Ascending aorta (tissue), 2 donors: ENCODE measurements at regions of chr19 and their contacts with region 1.

Region 1: DNA sequence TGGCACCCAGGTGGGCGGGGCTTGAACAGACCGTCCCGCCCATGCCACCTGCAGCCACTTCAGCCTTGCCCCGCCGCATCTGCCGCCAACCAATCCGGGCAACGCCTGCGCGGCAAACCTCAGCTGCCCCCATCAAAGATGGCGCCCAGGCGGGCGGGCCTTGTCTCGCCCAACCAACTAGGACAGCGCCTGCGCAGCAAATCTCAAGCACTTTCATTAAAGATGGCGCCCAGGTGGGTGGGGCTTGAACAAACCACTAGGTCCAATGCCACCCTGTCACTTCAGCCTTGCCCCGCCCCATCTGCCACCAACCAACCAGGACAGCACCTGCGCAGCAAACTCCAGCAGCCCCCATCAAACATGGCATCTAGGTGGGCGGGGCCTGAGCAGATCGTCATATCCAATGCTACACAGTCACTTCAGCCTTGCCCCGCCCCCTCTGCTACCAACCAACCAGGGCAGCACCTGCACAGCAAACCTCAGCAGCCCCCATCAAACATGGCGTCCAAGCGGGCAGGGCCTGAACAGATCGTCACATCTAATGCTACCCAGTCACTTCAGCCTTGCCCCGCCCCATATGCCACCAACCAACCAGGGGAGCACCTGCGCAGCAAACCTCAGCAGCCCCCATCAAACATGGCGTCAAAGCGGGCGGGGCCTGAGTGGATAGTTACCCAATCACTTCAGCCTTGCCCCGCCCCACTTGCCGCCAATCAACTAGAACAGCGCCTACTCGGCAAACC is 1.4 kb downstream of the PEG3 start:
- DNase-seq: peak; percentile 94 to 98
- H3K4me3 ChIP-seq: peak overlapping the region; percentile 57 to 70
- H3K27ac ChIP-seq: peak overlapping the region; percentile 86 to 95
- H3K4me1 ChIP-seq: no peaks in the 10 kb centered on the region
- H3K27me3 ChIP-seq: no peaks in the 10 kb centered on the region
- CTCF ChIP-seq: no peak

Region 2: GRCh38 chr19:56671613-56671994 is 167.5 kb before region 1 on chr19 and contains the start of gene ZNF835:
- intact Hi-C with region 1: loop called (anchors 2 kb)
- DNase-seq: peak; percentile 63 to 94
- H3K4me3 ChIP-seq: peak within 1 kb of the TSS; percentile 57 to 79
- H3K27ac ChIP-seq: no peak within 1 kb of the TSS
- H3K4me1 ChIP-seq: peaks cover 0 to 7% of the 10 kb centered on the region in 2 donors
- H3K27me3 ChIP-seq: no peaks in the 10 kb centered on the region
- CTCF ChIP-seq: peak in 2 of 3 experiments; percentile 26 to 34
- total RNA-seq, gene ZNF835: 4.0 TPM

Region 3: DNA sequence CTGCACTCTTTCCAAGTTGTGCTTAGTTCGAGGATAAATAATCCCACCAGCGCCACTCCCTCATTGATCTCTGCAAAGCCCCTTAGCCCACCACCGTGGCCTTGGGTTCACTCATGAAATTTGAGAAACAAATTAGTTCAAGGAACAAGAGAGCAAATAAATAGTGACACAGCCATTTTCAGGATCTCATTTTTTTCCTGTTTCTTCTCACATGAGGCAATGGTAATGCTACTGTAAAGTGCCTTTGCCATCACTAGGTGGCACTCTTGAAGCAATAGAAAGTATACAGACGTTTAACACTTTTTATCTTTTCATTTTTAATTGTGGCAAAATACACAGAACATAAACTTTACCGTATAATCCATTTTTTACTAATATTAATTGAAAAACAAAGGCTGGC is 90.7 kb before region 1 on chr19:
- intact Hi-C with region 1: loop called (anchors 2 kb)
- DNase-seq: no peak
- H3K4me3 ChIP-seq: no peak overlapping the region
- H3K27ac ChIP-seq: no peak overlapping the region
- H3K4me1 ChIP-seq: no peaks in the 10 kb centered on the region
- H3K27me3 ChIP-seq: no peaks in the 10 kb centered on the region
- CTCF ChIP-seq: peak in 2 of 3 experiments; percentile 33 to 45

Region 4: DNA sequence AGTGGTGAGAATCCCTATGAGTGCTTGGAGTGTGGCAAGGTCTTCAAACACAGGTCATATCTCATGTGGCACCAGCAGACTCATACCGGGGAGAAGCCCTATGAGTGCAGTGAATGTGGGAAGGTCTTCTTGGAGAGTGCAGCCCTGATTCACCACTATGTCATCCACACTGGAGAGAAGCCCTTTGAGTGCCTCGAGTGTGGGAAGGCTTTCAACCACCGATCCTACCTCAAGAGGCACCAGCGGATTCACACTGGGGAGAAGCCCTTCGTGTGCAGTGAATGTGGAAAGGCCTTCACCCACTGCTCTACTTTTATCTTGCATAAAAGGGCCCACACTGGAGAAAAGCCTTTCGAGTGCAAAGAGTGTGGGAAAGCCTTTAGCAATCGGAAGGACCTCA is 373.0 kb after region 1 on chr19:
- intact Hi-C with region 1: no loop called
- DNase-seq: no peak
- H3K4me3 ChIP-seq: no peak overlapping the region
- H3K27ac ChIP-seq: no peak overlapping the region
- H3K4me1 ChIP-seq: no peaks in the 10 kb centered on the region
- H3K27me3 ChIP-seq: no peaks in the 10 kb centered on the region
- CTCF ChIP-seq: no peak